ENCODE measurements at regions of chr1 and their contacts with region 1.

Region 1: GRCh38 chr1:61043010-61043820 is 39.1 kb upstream of the NFIA start:
- DNase-seq: no peak
- H3K4me3 ChIP-seq: peak overlapping the region; percentile 62 to 65
- H3K27ac ChIP-seq: peak overlapping the region; percentile 52
- H3K4me1 ChIP-seq: peaks cover 11% of the 10 kb centered on the region
- H3K27me3 ChIP-seq: no peaks in the 10 kb centered on the region
- CTCF ChIP-seq: peak; percentile 61 to 90 (median 78)
- POLR2A ChIP-seq: no peak

Region 2: DNA sequence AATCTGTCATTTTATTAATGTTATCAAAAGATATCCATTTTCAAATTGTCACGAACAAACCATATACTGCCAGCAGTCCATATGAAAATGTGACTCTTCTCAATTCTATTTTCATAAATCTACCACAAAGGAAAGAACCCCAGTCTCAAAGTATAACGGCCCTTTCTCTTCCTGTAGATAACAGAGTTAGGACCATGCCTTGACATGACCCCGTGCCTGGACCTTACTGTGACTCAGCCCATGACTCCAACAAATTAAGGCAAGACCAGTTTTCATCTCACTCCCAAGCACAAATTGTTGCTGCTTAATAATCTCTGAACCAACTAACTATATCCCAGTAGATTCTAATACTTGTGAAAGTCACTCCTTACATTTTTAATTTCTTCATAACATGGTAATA is 85.2 kb before region 1 on chr1:
- intact Hi-C with region 1: no loop called
- DNase-seq: no peak
- H3K4me3 ChIP-seq: no peak overlapping the region
- H3K27ac ChIP-seq: no peak overlapping the region
- H3K4me1 ChIP-seq: no peaks in the 10 kb centered on the region
- H3K27me3 ChIP-seq: no peaks in the 10 kb centered on the region
- CTCF ChIP-seq: no peak
- POLR2A ChIP-seq: no peak

Region 3: GRCh38 chr1:60969971-60970509 is 73.2 kb before region 1 on chr1:
- intact Hi-C with region 1: loop called (anchors 5 kb)
- DNase-seq: no peak
- H3K4me3 ChIP-seq: no peak overlapping the region
- H3K27ac ChIP-seq: no peak overlapping the region
- H3K4me1 ChIP-seq: no peaks in the 10 kb centered on the region
- H3K27me3 ChIP-seq: no peaks in the 10 kb centered on the region
- CTCF ChIP-seq: peak in 2 of 3 experiments; percentile 26 to 57
- POLR2A ChIP-seq: no peak

Region 4: GRCh38 chr1:61842871-61843514 is 799.8 kb after region 1 on chr1:
- intact Hi-C with region 1: no loop called
- DNase-seq: no peak
- H3K4me3 ChIP-seq: no peak overlapping the region
- H3K27ac ChIP-seq: no peak overlapping the region
- H3K4me1 ChIP-seq: no peaks in the 10 kb centered on the region
- H3K27me3 ChIP-seq: no peaks in the 10 kb centered on the region
- CTCF ChIP-seq: no peak
- POLR2A ChIP-seq: no peak